Tibial artery (tissue), 4 donors: ENCODE measurements at regions of chr15 and their contacts with region 1.

Region 1: DNA sequence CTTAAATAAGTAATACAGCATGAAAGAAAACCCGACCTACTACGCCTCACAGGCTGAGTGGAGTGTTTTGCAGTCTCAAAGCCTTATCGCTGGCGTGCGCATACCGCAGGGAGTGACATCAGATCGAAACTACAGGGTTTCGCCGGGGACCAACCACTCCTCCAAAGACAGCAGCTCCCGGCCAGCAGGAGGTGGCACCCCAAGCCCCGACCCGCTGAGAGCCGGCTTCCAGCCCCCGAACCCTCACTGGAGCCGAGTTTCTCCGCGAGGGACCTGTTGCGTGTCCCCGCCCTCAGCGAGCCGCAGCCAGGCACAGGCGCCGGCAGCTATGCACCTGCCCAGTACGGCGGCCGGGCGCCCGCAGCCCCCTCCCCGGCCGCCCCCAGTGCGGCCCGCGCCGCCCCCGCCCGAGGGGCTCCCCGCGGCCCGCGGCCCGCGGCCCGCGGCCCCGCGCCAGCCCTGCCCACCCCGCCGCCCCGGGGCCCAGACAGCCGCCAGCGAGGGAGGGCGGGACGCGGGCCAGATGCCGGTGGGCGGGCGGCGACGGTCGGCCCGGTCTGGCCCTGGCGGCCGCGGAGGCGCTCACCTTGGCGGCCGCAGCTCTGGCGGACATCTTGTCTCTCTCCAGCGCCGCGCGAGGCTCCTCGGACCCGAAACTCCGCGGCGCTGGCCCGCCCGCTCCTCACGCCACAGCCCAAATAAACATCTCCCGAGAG is 694 bp downstream of the TJP1 start:
- DNase-seq: peak; percentile 78 to 89
- H3K4me3 ChIP-seq: peak overlapping the region; percentile 81 to 85
- H3K27ac ChIP-seq: peak overlapping the region; percentile 90 to 95
- H3K4me1 ChIP-seq: peaks cover 0 to 52% (median 9%) of the 10 kb centered on the region in 4 donors
- H3K27me3 ChIP-seq: no peaks in the 10 kb centered on the region
- CTCF ChIP-seq: peak in 1 of 2 experiments; percentile 20

Region 2: DNA sequence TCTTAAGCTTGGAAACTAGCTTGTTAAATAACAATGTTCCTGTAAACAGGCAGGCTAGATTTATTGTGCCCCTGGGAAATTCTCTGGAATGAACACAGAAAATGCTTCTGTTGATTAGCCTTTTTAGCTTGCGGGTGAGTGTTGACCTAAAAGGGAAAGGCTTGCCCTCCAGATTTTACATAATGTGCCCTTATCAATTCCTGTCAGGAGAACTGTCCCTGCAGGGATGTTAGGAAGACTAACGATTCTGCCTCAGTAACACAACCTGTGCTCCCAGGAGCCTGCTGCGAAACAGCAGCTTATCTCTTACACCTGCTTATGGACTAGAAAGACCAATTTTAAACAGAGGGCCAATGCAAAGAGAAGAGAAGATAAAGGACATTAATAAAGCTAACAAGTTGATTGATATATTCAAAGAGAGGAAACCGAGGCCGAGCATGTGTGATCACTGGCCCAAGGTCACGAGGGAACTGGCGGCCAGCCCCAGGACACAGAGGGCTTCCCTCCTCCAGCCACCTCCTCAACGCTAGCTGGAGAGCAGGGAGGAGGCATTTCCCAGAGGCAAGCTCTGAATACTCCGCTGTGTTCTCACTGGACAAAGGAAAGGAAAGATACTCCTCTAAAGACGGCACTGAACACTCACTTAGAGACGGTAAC is 49.0 kb after region 1 on chr15:
- intact Hi-C with region 1: loop called (anchors 5 kb)
- DNase-seq: peak in 1 of 2 donors; percentile 77
- H3K4me3 ChIP-seq: peak overlapping the region; percentile 28 to 30
- H3K27ac ChIP-seq: peak overlapping the region; percentile 88 to 89
- H3K4me1 ChIP-seq: peaks cover 0 to 82% (median 24%) of the 10 kb centered on the region in 4 donors
- H3K27me3 ChIP-seq: no peaks in the 10 kb centered on the region
- CTCF ChIP-seq: no peak